ENCODE measurements at regions of chr4 and their contacts with region 1.

Region 1: DNA sequence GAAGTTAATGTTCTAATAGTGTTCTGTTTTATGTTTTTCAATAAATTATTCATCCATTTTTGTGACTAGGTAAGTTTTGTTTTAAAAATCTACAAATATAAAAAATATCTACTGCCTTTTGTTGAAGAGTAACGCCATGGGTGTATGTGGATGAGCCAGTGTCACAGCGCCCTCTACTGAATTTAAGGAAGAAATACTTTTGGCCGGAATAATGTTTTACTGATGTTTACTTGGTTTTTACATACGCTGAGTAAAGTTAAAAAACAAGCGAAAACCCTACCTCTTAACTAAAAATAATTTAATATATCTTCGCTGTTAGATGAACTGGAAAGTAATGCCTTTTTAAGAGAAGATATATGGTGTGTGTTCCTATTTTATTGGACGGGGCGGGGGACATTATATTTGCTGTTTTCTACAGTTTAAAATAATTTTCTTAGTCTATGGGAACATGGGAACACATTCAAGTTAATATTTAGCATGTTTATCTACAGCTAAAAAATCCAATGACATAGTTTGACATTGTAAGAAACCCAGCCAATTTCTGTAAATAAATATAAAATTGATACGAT is 86.1 kb downstream of the CPE start:
- DNase-seq: peak in 1 of 2 experiments; percentile 57
- H3K4me3 ChIP-seq: no peak overlapping the region
- H3K27ac ChIP-seq: no peak overlapping the region
- H3K4me1 ChIP-seq: no peaks in the 10 kb centered on the region
- H3K27me3 ChIP-seq: no peaks in the 10 kb centered on the region
- CTCF ChIP-seq: peak; percentile 88

Region 2: DNA sequence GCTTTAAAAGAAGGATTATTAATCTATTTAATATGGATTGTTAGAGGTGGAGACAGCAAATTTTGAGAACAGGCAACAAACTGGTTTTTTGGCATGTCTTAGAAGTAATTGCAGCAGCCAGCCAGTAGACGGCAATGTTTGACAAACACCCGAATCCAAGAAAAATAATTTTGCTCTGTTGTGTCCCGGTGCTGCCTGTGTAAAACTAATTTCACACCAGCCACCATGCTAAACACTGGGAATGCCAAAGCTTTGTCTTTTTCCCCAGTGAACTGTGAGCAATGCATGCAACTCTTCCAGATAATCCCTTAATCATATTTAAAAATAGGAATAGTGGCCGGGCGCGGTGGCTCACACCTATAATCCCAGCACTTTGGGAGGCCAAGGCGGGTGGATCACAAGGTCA is 685.1 kb before region 1 on chr4:
- CTCF ChIA-PET with region 1: no interaction called
- POLR2A ChIA-PET with region 1: no interaction called
- intact Hi-C with region 1: loop called (anchors 10 kb)
- DNase-seq: peak in 1 of 2 experiments; percentile 30
- H3K4me3 ChIP-seq: no peak overlapping the region
- H3K27ac ChIP-seq: no peak overlapping the region
- H3K4me1 ChIP-seq: no peaks in the 10 kb centered on the region
- H3K27me3 ChIP-seq: no peaks in the 10 kb centered on the region
- CTCF ChIP-seq: peak; percentile 72

Region 3: DNA sequence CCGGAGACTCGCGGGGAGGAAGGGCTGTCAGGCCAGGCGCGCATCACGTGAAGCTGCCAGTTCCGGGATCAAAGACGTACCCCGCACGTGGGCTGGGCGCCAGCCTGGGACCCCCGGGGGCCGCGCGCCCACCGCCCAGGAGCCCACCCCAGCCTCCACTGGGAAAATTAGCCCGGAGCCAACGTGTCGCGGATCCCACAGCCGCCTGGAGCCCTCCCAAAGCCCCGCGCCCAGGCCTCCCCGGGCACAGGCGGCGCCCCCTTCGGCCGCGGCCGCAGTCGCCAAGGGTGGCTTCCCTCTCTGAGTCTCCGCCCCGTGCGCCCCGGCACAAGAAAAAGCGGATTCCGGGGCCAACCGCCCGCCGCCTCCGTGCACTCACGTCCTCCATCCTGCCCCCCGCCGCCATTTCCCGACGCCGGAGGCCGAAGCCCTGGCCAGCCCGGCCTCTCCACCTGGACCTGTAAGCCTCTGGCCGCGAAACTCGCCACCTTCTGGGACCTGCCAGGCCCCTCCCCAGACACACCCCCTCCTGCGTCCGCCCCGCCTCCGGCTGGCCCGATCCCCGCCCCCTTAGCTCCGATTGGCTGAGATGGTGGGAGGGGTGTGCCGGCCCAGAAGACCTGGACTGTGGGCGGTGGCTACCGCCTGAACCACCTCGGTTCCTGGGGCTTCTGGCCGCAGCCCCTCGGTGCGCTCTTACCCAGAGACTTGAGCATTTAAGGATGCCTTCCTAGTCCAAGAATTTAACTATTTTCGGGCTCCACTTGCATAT is 352.3 kb before region 1 on chr4 and contains the start of gene TMEM192:
- CTCF ChIA-PET with region 1: no interaction called
- POLR2A ChIA-PET with region 1: no interaction called
- intact Hi-C with region 1: loop called (anchors 5 kb)
- DNase-seq: peak; percentile 69 to 95
- H3K4me3 ChIP-seq: peak within 1 kb of the TSS; percentile 80
- H3K27ac ChIP-seq: peak within 1 kb of the TSS; percentile 65
- H3K4me1 ChIP-seq: 0 out of 2 replicates have a peak, but pooled peaks cover 3% of the 10 kb centered on the region
- H3K27me3 ChIP-seq: no peaks in the 10 kb centered on the region
- CTCF ChIP-seq: no peak
- total RNA-seq, gene TMEM192: 11.5 and 16.8 TPM in 2 replicates

Region 4: GRCh38 chr4:165207431-165208220 is 257.3 kb before region 1 on chr4 and contains the start of gene KLHL2:
- CTCF ChIA-PET with region 1: no interaction called
- POLR2A ChIA-PET with region 1: no interaction called
- intact Hi-C with region 1: loop called (anchors 10 kb)
- DNase-seq: peak in 1 of 2 experiments; percentile 75
- H3K4me3 ChIP-seq: peak within 1 kb of the TSS; percentile 78
- H3K27ac ChIP-seq: no peak within 1 kb of the TSS
- H3K4me1 ChIP-seq: peaks cover 69% of the 10 kb centered on the region
- H3K27me3 ChIP-seq: no peaks in the 10 kb centered on the region
- CTCF ChIP-seq: no peak
- total RNA-seq, gene KLHL2: 26.4 and 27.2 TPM in 2 replicates

Region 5: GRCh38 chr4:165355900-165356300 is 109.0 kb before region 1 on chr4:
- CTCF ChIA-PET with region 1: interaction called, 3 read pairs
- POLR2A ChIA-PET with region 1: no interaction called
- intact Hi-C with region 1: loop called (anchors 2 kb)
- DNase-seq: no peak
- H3K4me3 ChIP-seq: no peak overlapping the region
- H3K27ac ChIP-seq: no peak overlapping the region
- H3K4me1 ChIP-seq: peaks cover 6% of the 10 kb centered on the region; the same call in 1 of the 2 replicates
- H3K27me3 ChIP-seq: no peaks in the 10 kb centered on the region
- CTCF ChIP-seq: peak; percentile 43; the same call in 1 of the 2 replicates

Region 6: GRCh38 chr4:165700855-165701254 is 236.0 kb after region 1 on chr4:
- CTCF ChIA-PET with region 1: no interaction called
- POLR2A ChIA-PET with region 1: no interaction called
- intact Hi-C with region 1: no loop called
- DNase-seq: no peak
- H3K4me3 ChIP-seq: no peak overlapping the region
- H3K27ac ChIP-seq: no peak overlapping the region
- H3K4me1 ChIP-seq: no peaks in the 10 kb centered on the region
- H3K27me3 ChIP-seq: no peaks in the 10 kb centered on the region
- CTCF ChIP-seq: no peak

Region 7: DNA sequence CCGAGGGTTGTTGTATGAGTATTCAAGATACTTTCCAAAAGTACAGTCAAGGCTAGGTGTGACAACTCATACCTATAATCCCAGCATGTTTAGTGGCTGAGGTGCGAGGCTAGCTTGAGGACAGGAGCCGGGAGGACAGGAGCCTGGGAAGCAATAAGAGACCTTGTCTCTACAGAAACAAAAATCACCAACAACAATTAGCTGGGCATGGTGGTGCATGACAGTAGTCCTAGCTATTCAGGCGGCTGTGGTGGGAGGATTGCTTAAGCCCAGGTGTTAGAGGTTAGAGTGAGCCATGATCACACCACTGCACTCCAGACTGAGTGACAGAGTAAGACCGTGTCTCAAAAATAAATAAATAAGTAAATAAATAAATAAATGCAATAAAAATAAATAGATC is 499.7 kb after region 1 on chr4:
- CTCF ChIA-PET with region 1: no interaction called
- POLR2A ChIA-PET with region 1: no interaction called
- intact Hi-C with region 1: no loop called
- DNase-seq: no peak
- H3K4me3 ChIP-seq: no peak overlapping the region
- H3K27ac ChIP-seq: no peak overlapping the region
- H3K4me1 ChIP-seq: no peaks in the 10 kb centered on the region
- H3K27me3 ChIP-seq: no peaks in the 10 kb centered on the region
- CTCF ChIP-seq: no peak

Measured in PC-9 (cell line).